Gastrocnemius medialis (tissue), 4 donors: ENCODE measurements at regions of chr17 and their contacts with region 1.

Region 1: DNA sequence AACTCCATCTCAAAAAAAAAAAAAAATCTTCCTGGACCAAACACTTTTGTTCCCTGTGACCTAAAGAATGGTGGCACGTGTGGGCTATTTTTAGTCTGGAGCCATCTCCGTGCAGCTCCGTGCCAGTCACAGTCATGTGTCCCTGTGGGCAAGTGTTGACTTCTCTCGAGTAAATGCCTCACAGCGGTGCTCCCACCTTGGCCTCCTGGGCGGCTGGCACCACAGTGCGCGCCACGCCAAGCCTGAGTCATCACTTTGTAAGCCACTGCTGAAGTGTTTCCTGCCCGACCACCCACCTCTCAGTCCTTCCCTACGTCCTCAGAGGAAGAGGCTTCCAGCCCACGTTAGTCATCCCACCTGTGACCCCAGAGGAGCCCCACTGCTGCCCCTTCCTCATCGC is 10.9 kb upstream of the HEXD start:
- DNase-seq: peak; percentile 89 to 91
- ATAC-seq: peak; percentile 99 to 100
- H3K4me3 ChIP-seq: peak overlapping the region in 1 of 4 donors; percentile 3
- H3K27ac ChIP-seq: peak overlapping the region; percentile 75 to 83 (median 78)
- H3K4me1 ChIP-seq: peaks cover 14% of the 10 kb centered on the region in 2 donors
- H3K27me3 ChIP-seq: no peaks in the 10 kb centered on the region
- CTCF ChIP-seq: no peak
- POLR2A ChIP-seq: no peak

Region 2: GRCh38 chr17:82230627-82231311 is 176.5 kb before region 1 on chr17:
- in situ Hi-C with region 1: no loop called
- intact Hi-C with region 1: no loop called
- DNase-seq: peak in 1 of 2 donors; percentile 80
- ATAC-seq: peak; percentile 6 to 8
- H3K4me3 ChIP-seq: peak overlapping the region; percentile 66 to 76 (median 68)
- H3K27ac ChIP-seq: peak overlapping the region; percentile 90 to 98 (median 93)
- H3K4me1 ChIP-seq: peaks cover 58 to 70% of the 10 kb centered on the region in 2 donors
- H3K27me3 ChIP-seq: no peaks in the 10 kb centered on the region
- CTCF ChIP-seq: peak; percentile 46 to 74 (median 64)
- POLR2A ChIP-seq: peak; percentile 47 to 73

Region 3: GRCh38 chr17:82450170-82451106 is 43.2 kb after region 1 on chr17 and contains the start of gene CYBC1:
- in situ Hi-C with region 1: no loop called
- intact Hi-C with region 1: loop called (anchors 1 kb)
- DNase-seq: peak; percentile 83 to 88
- ATAC-seq: peak; percentile 94 to 95
- H3K4me3 ChIP-seq: peak within 1 kb of the TSS; percentile 67 to 100 (median 87)
- H3K27ac ChIP-seq: peak within 1 kb of the TSS; percentile 84 to 91 (median 89)
- H3K4me1 ChIP-seq: peaks cover 10 to 25% of the 10 kb centered on the region in 2 donors
- H3K27me3 ChIP-seq: no peaks in the 10 kb centered on the region
- CTCF ChIP-seq: no peak
- POLR2A ChIP-seq: peak; percentile 92 to 98
- total RNA-seq, gene CYBC1: 17.3 to 29.8 (median 19.3) TPM